Activated T-helper 1 cell treated with anti-CD3 and anti-CD28 coated beads, Interleukin-12 subunit alpha, Interleukin-12 subunit beta, Interleukin-2, Interleukin-4 antibody, amounts not matched to agents 30 ng/mL and 10 ng/mL and 1 ng/mL, durations not matched to agents 14 hours and 24 hours and 36 hours (primary cell): ENCODE measurements at regions of chr3 and their contacts with region 1.

Region 1: DNA sequence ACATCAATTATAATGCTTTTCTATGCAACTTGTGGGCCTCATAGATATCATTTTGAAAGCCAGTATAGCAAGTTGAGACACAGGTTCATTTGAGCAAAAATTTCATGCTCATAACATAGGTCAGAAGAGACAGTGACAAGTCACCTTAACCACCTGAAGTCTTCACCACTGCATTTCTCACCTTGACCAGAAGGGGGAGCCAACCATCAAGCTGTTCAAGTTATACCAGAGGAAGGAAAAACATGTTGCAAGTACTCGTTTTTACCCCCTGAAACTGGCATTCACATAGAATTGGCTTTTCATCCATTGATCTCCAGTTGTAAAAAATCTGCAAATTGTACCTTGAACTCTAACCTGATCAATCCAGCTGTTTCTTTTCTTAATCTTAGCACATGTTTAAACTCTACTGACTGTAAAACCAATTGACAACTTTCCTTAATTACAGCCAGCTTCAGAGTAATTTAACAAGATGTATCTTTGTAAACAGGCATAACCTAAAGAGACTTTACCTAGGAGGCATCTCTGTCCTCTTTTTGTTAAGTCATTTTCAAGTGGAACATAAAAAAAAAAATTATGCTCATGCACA is 1.4 kb downstream of the LMOD3 start:
- DNase-seq: peak; percentile 71
- H3K4me3 Mint-ChIP-seq: no peak overlapping the region
- H3K27ac Mint-ChIP-seq: no peak overlapping the region
- H3K4me1 Mint-ChIP-seq: peaks cover 7% of the 10 kb centered on the region
- H3K27me3 Mint-ChIP-seq: peaks cover 7% of the 10 kb centered on the region

Region 2: GRCh38 chr3:69108811-69109210 is 12.2 kb before region 1 on chr3:
- intact Hi-C with region 1: no loop called
- DNase-seq: no peak
- H3K4me3 Mint-ChIP-seq: no peak overlapping the region
- H3K27ac Mint-ChIP-seq: no peak overlapping the region
- H3K4me1 Mint-ChIP-seq: peaks cover 22% of the 10 kb centered on the region
- H3K27me3 Mint-ChIP-seq: no peaks in the 10 kb centered on the region

Region 3: DNA sequence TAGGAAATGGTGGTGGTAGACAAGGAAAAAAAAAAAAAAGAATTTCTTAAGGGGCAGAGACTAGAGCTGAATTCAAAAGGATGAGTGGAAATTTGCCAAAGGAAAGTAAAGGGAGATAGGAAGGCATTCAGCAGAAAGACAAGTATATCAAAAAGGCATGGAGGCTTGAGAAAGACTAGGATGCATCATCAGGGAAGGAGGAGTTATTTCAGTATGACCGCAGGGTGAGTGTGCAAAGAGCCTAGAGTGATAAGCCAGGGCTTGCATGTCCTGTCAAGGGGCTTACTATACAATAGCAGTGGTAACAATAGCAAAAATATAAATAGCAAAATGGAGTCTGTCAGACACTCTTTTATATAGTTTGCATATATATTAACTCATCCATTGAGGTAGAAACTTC is 152.9 kb after region 1 on chr3:
- intact Hi-C with region 1: no loop called
- DNase-seq: no peak
- H3K4me3 Mint-ChIP-seq: no peak overlapping the region
- H3K27ac Mint-ChIP-seq: no peak overlapping the region
- H3K4me1 Mint-ChIP-seq: peaks cover 3% of the 10 kb centered on the region
- H3K27me3 Mint-ChIP-seq: no peaks in the 10 kb centered on the region

Region 4: GRCh38 chr3:69410250-69410649 is 289.3 kb after region 1 on chr3:
- intact Hi-C with region 1: loop called (anchors 1 kb)
- DNase-seq: peak; percentile 57
- H3K4me3 Mint-ChIP-seq: no peak overlapping the region
- H3K27ac Mint-ChIP-seq: no peak overlapping the region
- H3K4me1 Mint-ChIP-seq: peaks cover 11% of the 10 kb centered on the region
- H3K27me3 Mint-ChIP-seq: peaks cover 9% of the 10 kb centered on the region

Region 5: GRCh38 chr3:69425261-69425660 is 304.3 kb after region 1 on chr3:
- intact Hi-C with region 1: loop called (anchors 1 kb)
- DNase-seq: peak; percentile 2
- H3K4me3 Mint-ChIP-seq: no peak overlapping the region
- H3K27ac Mint-ChIP-seq: no peak overlapping the region
- H3K4me1 Mint-ChIP-seq: peaks cover 5% of the 10 kb centered on the region
- H3K27me3 Mint-ChIP-seq: no peaks in the 10 kb centered on the region

Region 6: GRCh38 chr3:69671082-69671952 is 550.3 kb after region 1 on chr3:
- intact Hi-C with region 1: loop called (anchors 1 kb)
- DNase-seq: no peak
- H3K4me3 Mint-ChIP-seq: no peak overlapping the region
- H3K27ac Mint-ChIP-seq: no peak overlapping the region
- H3K4me1 Mint-ChIP-seq: no peaks in the 10 kb centered on the region
- H3K27me3 Mint-ChIP-seq: no peaks in the 10 kb centered on the region

Region 7: DNA sequence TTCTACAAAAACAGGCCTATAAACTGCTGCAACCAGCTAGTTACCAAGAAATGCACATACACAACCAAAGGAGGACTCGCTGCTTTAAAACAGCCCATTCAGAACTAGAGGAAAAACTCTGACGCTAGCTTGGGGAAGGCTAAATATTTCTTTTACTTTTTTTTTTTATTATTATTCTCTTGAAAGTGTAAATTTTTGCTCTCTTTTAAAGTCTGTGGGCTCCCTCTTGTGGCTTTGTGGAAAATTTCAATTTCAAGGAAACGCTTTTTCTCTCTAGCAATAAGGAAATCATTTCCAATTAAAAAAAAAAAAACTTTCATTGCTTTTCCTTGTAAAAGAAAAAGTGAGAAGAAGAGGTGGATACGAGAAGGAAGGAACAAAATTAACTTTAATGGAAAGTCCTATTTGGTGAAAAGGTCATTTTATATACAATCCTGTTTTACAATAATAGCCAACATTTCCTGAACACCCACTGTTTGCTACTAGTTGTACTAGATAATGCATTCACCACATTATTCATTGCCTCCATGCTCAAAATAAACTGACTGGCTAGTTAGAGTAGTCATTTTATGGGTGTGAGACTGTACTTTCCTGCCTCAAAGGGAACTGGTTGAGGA is 827.4 kb after region 1 on chr3:
- intact Hi-C with region 1: loop called (anchors 5 kb)
- DNase-seq: no peak
- H3K4me3 Mint-ChIP-seq: no peak overlapping the region
- H3K27ac Mint-ChIP-seq: no peak overlapping the region
- H3K4me1 Mint-ChIP-seq: no peaks in the 10 kb centered on the region
- H3K27me3 Mint-ChIP-seq: peaks cover 5% of the 10 kb centered on the region